Mammary epithelial cell (primary cell): ENCODE measurements at regions of chr13 and their contacts with region 1.

Region 1: GRCh38 chr13:111216166-111216960 is 101.3 kb downstream of the ARHGEF7 start:
- DNase-seq: no peak
- H3K4me3 ChIP-seq: no peak overlapping the region
- H3K27ac ChIP-seq: no peak overlapping the region
- H3K4me1 ChIP-seq: no peaks in the 10 kb centered on the region
- H3K27me3 ChIP-seq: no peaks in the 10 kb centered on the region
- CTCF ChIP-seq: peak; percentile 36 to 64

Region 2: DNA sequence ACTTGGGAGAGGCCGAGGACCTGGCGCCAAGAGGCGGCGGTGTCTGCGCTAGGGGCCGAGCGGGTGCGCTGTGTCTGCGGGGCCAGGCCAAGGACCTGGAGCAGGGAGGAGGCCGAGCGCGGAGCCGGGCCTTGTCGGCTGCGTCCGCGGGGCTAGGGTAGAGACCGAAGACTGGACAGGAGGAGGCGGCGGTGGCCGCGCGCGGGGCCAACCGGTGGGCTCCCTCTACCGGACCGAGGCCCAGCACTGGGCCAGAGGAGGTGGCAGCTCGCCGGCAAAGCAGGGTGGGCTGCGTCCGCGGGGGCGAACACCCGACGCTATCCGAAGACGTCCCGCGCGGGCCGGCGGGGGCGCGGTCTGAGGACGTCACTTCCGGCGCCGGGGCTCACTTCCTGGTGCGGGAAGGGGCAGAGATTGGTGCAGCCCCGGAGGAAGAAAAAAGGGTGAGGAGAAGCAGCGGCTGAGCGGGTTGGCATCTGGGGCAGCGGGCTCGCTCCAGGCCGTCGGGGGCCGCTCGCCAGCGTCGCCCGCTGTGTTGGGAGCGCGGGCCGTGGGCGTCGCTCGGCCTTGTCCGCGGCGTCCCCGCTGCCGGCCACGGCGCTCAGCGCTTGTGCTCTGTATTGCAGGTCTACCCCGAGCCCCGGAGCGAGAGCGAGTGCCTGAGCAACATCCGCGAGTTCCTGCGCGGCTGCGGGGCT is 62.9 kb before region 1 on chr13:
- CTCF ChIA-PET with region 1: no interaction called
- dilution Hi-C with region 1: no loop called
- in situ Hi-C with region 1: no loop called
- intact Hi-C with region 1: loop called (anchors 1 kb)
- DNase-seq: peak; percentile 90
- H3K4me3 ChIP-seq: peak overlapping the region; percentile 54 to 87 (median 81)
- H3K27ac ChIP-seq: peak overlapping the region; percentile 86
- H3K4me1 ChIP-seq: peaks cover 14% of the 10 kb centered on the region
- H3K27me3 ChIP-seq: no peaks in the 10 kb centered on the region
- CTCF ChIP-seq: peak in 1 of 2 donors; percentile 31

Region 3: GRCh38 chr13:111202745-111203144 is 13.6 kb before region 1 on chr13:
- CTCF ChIA-PET with region 1: interaction called, 14 read pairs
- dilution Hi-C with region 1: no loop called
- in situ Hi-C with region 1: no loop called
- intact Hi-C with region 1: no loop called
- DNase-seq: no peak
- H3K4me3 ChIP-seq: no peak overlapping the region
- H3K27ac ChIP-seq: no peak overlapping the region
- H3K4me1 ChIP-seq: peaks cover 8% of the 10 kb centered on the region
- H3K27me3 ChIP-seq: no peaks in the 10 kb centered on the region
- CTCF ChIP-seq: no peak

Region 4: GRCh38 chr13:111359237-111359915 is 143.0 kb after region 1 on chr13:
- CTCF ChIA-PET with region 1: no interaction called
- dilution Hi-C with region 1: no loop called
- in situ Hi-C with region 1: no loop called
- intact Hi-C with region 1: no loop called
- DNase-seq: no peak
- H3K4me3 ChIP-seq: no peak overlapping the region
- H3K27ac ChIP-seq: no peak overlapping the region
- H3K4me1 ChIP-seq: no peaks in the 10 kb centered on the region
- H3K27me3 ChIP-seq: no peaks in the 10 kb centered on the region
- CTCF ChIP-seq: no peak